PC-9 (cell line): ENCODE measurements at regions of chr4 and their contacts with region 1.

Region 1: DNA sequence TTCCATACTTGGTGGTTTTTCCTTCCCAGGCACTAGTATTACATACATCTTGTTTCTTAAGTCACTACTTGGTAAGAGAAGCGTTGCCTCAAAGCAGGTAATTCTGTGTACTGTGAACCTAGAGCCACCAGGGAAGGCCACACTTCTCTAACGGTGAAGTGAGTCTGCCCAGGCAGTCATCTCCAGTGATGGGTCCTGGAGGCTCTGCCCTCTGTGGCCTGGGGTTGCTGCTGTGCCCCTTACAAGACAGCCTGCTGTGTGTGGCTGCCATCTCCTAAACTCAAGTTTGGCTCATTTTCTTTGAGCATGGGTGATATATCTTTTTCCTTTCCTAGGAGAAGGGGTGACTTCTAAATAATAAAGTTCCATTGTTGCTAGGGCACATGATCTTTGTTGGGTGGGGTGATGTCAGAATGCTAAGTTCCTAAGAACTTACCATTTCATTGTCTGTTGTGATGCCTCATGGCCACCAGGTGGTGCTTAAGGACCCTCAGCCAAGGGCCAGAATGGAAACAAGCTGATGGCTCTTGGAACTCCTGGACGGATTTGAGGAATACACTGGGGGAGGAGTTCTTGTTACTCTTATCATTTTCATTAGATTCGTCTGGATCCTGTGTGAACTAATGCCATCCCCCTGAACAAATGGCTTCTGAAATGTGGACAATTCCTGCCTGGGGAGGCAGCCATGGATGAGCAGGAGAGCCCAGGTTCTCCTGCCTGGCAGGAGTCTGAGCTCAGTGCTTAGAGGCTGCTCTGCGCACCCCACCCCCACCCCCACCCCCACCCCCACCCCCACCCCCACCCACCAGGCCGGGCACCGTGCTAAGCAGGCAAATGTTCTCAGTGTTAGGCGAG is 41.1 kb upstream of the WDR1 start:
- DNase-seq: peak; percentile 16 to 45
- H3K4me3 ChIP-seq: no peak overlapping the region
- H3K27ac ChIP-seq: no peak overlapping the region
- H3K4me1 ChIP-seq: no peaks in the 10 kb centered on the region
- H3K27me3 ChIP-seq: peaks cover 4% of the 10 kb centered on the region
- CTCF ChIP-seq: peak; percentile 78

Region 2: DNA sequence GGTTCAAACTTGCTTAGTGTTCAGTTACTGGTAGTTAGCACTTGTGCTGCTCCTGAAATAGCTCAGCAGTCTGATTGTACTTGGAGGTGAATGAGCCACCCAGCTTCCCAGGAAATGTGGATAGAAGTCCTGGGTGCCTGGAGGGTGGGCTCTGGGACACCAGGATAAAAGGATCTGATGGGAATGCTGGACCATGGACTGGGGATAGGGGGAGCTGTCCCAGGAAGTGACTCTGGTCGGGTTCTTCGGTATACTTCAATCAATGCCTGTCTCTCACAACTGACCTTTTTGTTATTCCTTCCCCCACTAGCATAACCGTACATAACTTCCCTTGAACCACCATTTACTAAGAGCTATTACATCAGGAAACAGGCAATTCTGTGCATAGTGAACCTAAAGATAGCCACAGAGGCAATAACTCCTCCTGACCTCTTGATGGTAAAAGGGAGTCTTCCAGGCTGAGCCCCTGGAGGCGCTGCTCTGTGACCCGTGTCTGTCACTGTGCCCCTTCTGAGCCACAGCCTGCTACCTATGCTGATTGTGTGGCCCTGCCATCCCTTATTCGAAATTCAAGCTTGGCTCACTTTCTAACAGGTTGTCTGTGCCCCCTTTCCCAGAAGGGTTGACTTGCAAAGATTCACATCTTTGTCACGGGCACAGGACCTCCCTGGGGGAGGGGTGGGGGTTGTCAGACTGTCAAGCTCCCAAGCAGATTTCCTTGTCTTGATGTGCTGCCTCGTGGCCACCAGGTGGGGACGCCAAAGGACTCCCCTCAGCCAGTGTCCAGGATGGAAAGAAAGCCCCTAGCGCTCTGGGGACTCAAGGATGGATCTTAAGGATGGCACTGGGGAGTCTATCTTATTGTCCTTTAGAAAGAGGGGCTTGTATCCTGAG is 16.6 kb before region 1 on chr4:
- CTCF ChIA-PET with region 1: no interaction called
- POLR2A ChIA-PET with region 1: no interaction called
- intact Hi-C with region 1: no loop called
- DNase-seq: no peak
- H3K4me3 ChIP-seq: no peak overlapping the region
- H3K27ac ChIP-seq: no peak overlapping the region
- H3K4me1 ChIP-seq: no peaks in the 10 kb centered on the region
- H3K27me3 ChIP-seq: peaks cover 90% of the 10 kb centered on the region
- CTCF ChIP-seq: no peak

Region 3: DNA sequence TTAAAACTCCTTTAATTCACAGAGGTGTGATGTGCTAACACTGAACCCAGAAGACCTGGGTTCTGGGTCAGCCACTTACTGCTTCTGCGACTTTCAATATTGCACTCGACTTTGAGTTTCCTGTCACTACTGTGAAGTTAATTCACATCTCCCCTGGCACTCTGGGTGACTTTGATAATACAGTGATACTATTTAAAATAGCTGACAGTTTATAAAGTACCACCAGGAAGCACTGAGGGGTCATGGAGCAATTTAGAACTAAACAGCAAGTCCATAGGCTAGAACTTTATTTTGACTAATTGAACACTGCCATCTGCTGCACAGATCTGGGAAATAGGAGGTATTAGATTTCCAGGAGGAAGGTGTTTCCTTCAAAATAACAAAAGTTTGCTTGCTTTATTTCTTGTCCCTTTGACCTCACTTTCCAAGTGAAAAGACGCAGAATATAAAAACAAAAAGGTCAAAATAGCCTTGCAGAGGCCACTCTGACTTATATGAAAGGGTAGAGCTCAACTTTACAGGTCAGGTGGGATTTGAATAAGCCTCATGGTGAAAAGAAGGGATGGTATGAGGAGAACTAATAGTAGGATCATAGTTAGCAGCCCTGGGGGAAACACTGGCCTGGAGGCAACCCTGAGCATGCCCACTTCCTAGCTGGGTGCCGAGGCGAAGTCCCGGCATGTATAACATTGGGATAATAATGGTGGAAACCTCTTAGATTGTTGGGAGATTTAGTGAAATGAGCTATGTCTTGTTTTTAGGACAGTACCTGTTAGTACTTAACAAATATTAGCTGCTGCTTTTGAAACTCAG is 246.1 kb after region 1 on chr4:
- CTCF ChIA-PET with region 1: no interaction called
- POLR2A ChIA-PET with region 1: no interaction called
- intact Hi-C with region 1: loop called (anchors 10 kb)
- DNase-seq: peak in 1 of 2 experiments; percentile 6
- H3K4me3 ChIP-seq: no peak overlapping the region
- H3K27ac ChIP-seq: no peak overlapping the region
- H3K4me1 ChIP-seq: no peaks in the 10 kb centered on the region
- H3K27me3 ChIP-seq: no peaks in the 10 kb centered on the region; the same call in 1 of the 2 replicates
- CTCF ChIP-seq: peak; percentile 54

Region 4: DNA sequence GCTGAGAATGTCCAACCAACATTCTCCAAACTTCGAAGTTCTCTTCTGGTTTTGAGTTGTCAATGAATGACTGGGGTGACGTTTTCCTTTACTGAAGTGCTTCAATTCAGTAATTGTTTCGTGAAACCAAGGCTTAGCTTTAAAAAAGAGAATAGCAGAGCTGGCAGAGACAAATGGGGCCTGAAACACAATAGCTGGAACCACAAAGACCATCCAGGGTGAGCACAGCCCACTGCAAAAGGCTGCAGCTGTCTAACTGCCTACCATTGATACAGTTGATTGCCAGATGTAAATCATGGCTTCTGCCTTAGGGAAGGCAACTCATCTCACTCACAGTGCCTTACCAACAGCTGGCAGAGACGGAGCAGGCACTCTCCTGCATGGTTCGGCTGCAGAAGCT is 378.2 kb after region 1 on chr4:
- CTCF ChIA-PET with region 1: interaction called, 3 read pairs
- POLR2A ChIA-PET with region 1: no interaction called
- intact Hi-C with region 1: loop called (anchors 2 kb)
- DNase-seq: no peak
- H3K4me3 ChIP-seq: no peak overlapping the region
- H3K27ac ChIP-seq: no peak overlapping the region
- H3K4me1 ChIP-seq: no peaks in the 10 kb centered on the region
- H3K27me3 ChIP-seq: no peaks in the 10 kb centered on the region
- CTCF ChIP-seq: no peak